Activated naive CD4-positive, alpha-beta T cell treated with anti-CD3 and anti-CD28 coated beads, Interleukin-2, amount 10 ng/mL, durations not matched to agents 7 days and 5 days (primary cell): ENCODE measurements at regions of chrX and their contacts with region 1.

Region 1: DNA sequence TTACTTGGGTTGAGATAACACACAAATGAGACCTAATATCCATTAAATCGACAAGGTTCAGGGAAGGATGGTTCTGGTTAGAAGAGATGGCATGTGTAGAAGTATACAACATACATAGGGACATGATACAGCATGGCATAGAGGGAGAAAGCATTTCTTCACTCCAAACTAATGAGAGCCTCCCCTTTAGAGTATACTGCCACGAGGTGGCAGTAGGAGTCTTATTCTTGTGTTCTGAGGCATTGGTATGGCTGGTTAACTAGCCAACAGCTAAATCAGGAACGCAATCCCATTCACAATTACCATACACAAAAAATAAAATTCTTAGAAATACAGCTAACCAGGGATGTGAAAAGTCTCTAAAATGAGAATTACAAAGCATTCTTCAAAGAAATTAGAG is 29.1 kb upstream of the TRO start:
- DNase-seq: peak; percentile 37
- H3K4me3 Mint-ChIP-seq: no peak overlapping the region
- H3K27ac Mint-ChIP-seq: no peak overlapping the region
- H3K4me1 Mint-ChIP-seq: no peaks in the 10 kb centered on the region
- H3K27me3 Mint-ChIP-seq: no peaks in the 10 kb centered on the region

Region 2: GRCh38 chrX:55057675-55058249 is 166.2 kb after region 1 on chrX:
- CTCF ChIA-PET with region 1: interaction called, 13 read pairs
- DNase-seq: peak; percentile 34
- H3K4me3 Mint-ChIP-seq: no peak overlapping the region
- H3K27ac Mint-ChIP-seq: no peak overlapping the region
- H3K4me1 Mint-ChIP-seq: peaks cover 19% of the 10 kb centered on the region
- H3K27me3 Mint-ChIP-seq: no peaks in the 10 kb centered on the region